A549 (cell line): ENCODE measurements at regions of chr12 and their contacts with region 1.

Region 1: DNA sequence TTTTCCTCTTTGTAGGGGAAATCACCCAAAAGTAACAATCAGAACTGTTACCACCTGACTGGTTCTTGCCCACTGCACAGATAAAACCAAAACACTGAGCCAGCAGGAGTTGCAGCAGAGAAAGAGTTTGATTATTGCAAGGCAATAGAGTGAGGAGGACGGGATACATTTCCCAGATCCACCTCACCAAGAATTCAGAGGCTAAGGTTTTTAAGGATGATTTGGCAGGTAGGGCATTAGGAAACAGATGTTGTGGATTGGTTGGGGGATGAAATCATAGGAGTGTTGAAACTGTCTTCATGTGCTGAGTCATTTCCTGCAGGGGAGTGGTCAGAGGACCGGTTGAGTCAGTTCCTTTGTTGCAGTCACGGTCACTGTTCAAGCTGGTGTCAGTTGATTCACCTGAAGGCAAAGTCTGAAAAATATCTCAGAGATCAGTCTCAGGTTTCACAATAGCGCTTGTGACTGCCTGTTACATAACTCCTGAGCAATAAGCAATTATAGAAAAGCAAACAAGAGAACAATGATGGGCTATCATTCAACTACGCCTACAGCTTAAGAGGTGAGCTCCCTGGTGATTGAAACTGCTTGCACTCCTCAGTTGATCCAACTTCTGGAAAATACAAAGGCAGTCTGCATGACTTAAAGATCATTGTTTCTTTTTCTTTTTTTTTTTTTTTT is 20.3 kb upstream of the AMN1 start:
- DNase-seq: peak; percentile 98 to 100
- ATAC-seq: peak; percentile 96 to 99
- H3K4me3 ChIP-seq: no peak overlapping the region
- H3K27ac ChIP-seq: peak overlapping the region; percentile 81 to 90
- H3K4me1 ChIP-seq: peaks cover 63% of the 10 kb centered on the region
- CTCF ChIP-seq: no peak
- EP300 ChIP-seq: peak; percentile 98
- POLR2A ChIP-seq: no peak
- RAD21 ChIP-seq: peak; percentile 52 to 76; a peak in 4 of 5 replicates

Region 2: DNA sequence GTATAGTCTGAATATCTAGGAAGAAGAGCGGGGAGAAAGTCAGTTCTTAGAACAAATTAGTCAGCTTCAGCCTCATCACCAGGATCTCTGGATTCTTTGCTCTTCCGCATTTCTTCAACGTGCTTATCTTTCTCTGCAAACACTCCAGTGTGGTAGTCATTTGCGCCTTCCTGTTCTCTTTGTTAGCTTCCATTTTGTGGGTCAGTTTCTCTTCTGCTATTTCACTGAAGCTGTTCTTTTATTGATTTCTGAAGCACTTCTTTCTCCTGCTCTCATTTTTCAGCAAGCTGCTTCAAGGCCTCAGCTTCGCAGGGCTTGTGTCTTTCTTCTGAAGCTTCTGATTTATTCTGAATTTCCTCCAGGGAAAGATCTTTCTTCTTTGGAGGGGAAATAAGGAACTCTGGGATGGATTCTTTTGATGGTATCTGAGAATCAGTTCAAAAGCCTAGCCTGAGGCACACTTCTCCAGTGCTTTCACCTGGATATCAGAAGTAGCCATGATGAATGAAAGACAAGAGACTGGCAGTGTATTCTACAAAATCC is 33.8 kb before region 1 on chr12:
- CTCF ChIA-PET with region 1: no interaction called
- POLR2A ChIA-PET with region 1: no interaction called
- DNase-seq: peak in 1 of 2 experiments; percentile 24
- ATAC-seq: peak in 1 of 2 experiments; percentile 30; a peak in 1 of 6 replicates
- H3K4me3 ChIP-seq: no peak overlapping the region
- H3K27ac ChIP-seq: peak overlapping the region in 1 of 2 experiments; percentile 19; a peak in 2 of 6 replicates
- H3K4me1 ChIP-seq: no peaks in the 10 kb centered on the region
- CTCF ChIP-seq: no peak
- EP300 ChIP-seq: no peak
- POLR2A ChIP-seq: no peak
- RAD21 ChIP-seq: no peak

Region 3: DNA sequence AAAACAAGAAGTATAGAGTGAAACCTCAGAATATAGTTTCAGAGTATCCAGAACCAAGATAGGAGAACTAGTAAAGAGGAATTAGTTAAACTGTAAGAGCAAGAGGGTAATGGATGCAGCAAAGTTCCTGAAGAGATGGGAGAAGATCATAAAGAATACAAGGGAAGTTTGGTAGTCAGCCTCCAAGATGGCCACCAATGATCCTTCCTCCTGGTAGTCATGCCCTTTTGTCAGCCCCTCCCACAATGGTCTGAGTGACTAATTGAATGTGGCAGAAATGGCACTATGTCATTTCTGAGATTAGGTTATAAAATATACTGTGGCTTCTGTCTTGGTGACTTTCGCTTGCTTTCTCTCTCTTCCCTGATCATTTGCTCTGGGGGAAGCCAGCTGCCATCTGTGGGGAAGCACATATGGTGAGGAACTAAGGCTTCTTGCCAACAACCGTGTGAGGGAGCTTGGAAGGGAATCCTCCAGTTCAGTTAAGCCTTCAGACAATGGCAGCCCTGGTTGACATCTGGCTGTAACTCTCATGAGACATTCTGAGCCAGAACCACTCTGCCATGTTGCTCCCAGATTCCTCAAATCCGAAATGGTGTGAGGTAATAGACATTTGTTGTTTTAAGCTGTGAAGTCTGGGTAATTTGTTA is 35.0 kb after region 1 on chr12:
- CTCF ChIA-PET with region 1: no interaction called
- POLR2A ChIA-PET with region 1: no interaction called
- DNase-seq: no peak
- ATAC-seq: no peak
- H3K4me3 ChIP-seq: no peak overlapping the region
- H3K27ac ChIP-seq: no peak overlapping the region
- H3K4me1 ChIP-seq: peaks cover 2% of the 10 kb centered on the region; the same call in 1 of the 3 replicates
- CTCF ChIP-seq: no peak
- EP300 ChIP-seq: no peak
- POLR2A ChIP-seq: no peak
- RAD21 ChIP-seq: no peak

Region 4: DNA sequence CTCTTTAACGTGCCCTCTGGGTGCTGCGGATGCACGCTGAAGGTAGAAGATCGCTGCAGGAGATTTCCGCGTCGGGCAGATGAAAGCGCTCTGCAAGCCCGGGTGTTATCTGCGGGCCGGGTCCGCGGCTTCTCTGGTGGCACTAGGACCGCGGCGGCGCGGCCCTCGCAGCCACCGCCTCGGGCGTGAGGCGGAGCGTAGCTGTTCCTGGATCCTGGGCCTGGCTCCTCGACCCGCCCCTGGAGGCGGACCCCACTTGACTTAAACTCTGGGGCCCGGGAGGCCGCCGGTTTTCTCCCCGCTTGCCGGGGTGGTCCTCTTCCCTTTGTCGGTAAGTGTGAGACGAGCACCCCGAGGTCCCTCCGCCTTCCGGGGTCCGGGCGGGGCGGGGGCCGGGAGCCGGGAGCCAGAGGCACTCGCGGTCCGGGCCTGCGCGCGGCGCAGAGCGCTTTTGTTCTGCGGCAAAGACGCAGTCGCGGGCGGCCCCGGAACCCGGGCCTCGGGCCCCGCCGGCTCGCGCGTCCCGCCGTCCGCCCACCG is 210.1 kb after region 1 on chr12 and contains the start of gene RESF1:
- CTCF ChIA-PET with region 1: no interaction called
- POLR2A ChIA-PET with region 1: interaction called, 10 read pairs
- DNase-seq: peak; percentile 81 to 93
- ATAC-seq: peak; percentile 97 to 98
- H3K4me3 ChIP-seq: peak within 1 kb of the TSS; percentile 95
- H3K27ac ChIP-seq: peak within 1 kb of the TSS; percentile 94 to 98
- H3K4me1 ChIP-seq: peaks cover 26% of the 10 kb centered on the region
- CTCF ChIP-seq: no peak
- EP300 ChIP-seq: no peak
- POLR2A ChIP-seq: peak; percentile 62
- RAD21 ChIP-seq: peak in 1 of 2 experiments; percentile 16; a peak in 1 of 5 replicates
- polyA plus RNA-seq, gene RESF1: 40.6 and 45.4 TPM in 2 replicates